PC-3 (cell line): ENCODE measurements at regions of chr2 and their contacts with region 1.

Region 1: DNA sequence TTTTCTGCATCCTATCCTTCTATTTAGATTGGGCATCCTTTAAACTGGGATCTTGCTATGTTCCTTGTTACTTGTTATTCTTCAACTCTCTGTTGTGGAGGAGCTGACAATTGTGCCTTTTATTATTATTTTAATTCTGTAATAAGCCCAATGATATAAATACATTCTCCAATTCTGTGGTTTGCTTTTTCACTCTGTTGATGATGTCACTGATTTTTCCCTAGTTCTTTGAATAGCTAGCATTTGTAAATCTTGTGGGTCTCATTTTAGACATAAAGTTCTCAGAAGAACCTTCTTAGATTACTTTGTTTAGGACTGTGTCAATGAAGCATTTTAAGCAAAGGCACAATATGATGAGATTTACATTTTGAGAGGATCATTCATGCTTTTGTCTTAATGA is 79.5 kb upstream of the SLC8A1 start:
- DNase-seq: no peak
- ATAC-seq: no peak
- H3K4me3 ChIP-seq: no peak overlapping the region
- H3K27ac ChIP-seq: no peak overlapping the region
- H3K4me1 ChIP-seq: no peaks in the 10 kb centered on the region
- H3K27me3 ChIP-seq: no peaks in the 10 kb centered on the region
- CTCF ChIP-seq: no peak

Region 2: GRCh38 chr2:40564184-40564583 is 32.8 kb after region 1 on chr2:
- CTCF ChIA-PET with region 1: no interaction called
- POLR2A ChIA-PET with region 1: no interaction called
- intact Hi-C with region 1: no loop called
- DNase-seq: peak; percentile 7
- ATAC-seq: no peak
- H3K4me3 ChIP-seq: no peak overlapping the region
- H3K27ac ChIP-seq: no peak overlapping the region
- H3K4me1 ChIP-seq: peaks cover 5% of the 10 kb centered on the region
- H3K27me3 ChIP-seq: no peaks in the 10 kb centered on the region
- CTCF ChIP-seq: no peak

Region 3: GRCh38 chr2:41400088-41400665 is 868.8 kb after region 1 on chr2:
- CTCF ChIA-PET with region 1: interaction called, 12 read pairs
- POLR2A ChIA-PET with region 1: no interaction called
- intact Hi-C with region 1: no loop called
- DNase-seq: peak; percentile 51
- ATAC-seq: peak; percentile 58; the same call in 1 of the 2 replicates
- H3K4me3 ChIP-seq: no peak overlapping the region
- H3K27ac ChIP-seq: no peak overlapping the region
- H3K4me1 ChIP-seq: no peaks in the 10 kb centered on the region
- H3K27me3 ChIP-seq: no peaks in the 10 kb centered on the region
- CTCF ChIP-seq: peak; percentile 71